Pancreas (tissue), 10 donors: ENCODE measurements at regions of chr9 and their contacts with region 1.

Region 1: GRCh38 chr9:100216178-100216787 is 117.2 kb downstream of the INVS start:
- DNase-seq: peak in 5 of 6 donors; percentile 33 to 67 (median 48)
- ATAC-seq: peak; percentile 46 to 90 (median 84)
- H3K4me3 ChIP-seq: no peak overlapping the region
- H3K27ac ChIP-seq: no peak overlapping the region
- H3K4me1 ChIP-seq: no peaks in the 10 kb centered on the region
- H3K27me3 ChIP-seq: no peaks in the 10 kb centered on the region
- CTCF ChIP-seq: peak; percentile 37 to 62 (median 53)

Region 2: GRCh38 chr9:100028201-100028784 is 188.0 kb before region 1 on chr9:
- intact Hi-C with region 1: loop called in 2 of 3 experiments (anchors 10 kb)
- DNase-seq: peak; percentile 42 to 79 (median 68)
- ATAC-seq: peak; percentile 87 to 100 (median 98)
- H3K4me3 ChIP-seq: no peak overlapping the region
- H3K27ac ChIP-seq: no peak overlapping the region
- H3K4me1 ChIP-seq: no peaks in the 10 kb centered on the region
- H3K27me3 ChIP-seq: no peaks in the 10 kb centered on the region
- CTCF ChIP-seq: peak; percentile 72 to 92 (median 87)